A549 (cell line): ENCODE measurements at regions of chr2 and their contacts with region 1.

Region 1: DNA sequence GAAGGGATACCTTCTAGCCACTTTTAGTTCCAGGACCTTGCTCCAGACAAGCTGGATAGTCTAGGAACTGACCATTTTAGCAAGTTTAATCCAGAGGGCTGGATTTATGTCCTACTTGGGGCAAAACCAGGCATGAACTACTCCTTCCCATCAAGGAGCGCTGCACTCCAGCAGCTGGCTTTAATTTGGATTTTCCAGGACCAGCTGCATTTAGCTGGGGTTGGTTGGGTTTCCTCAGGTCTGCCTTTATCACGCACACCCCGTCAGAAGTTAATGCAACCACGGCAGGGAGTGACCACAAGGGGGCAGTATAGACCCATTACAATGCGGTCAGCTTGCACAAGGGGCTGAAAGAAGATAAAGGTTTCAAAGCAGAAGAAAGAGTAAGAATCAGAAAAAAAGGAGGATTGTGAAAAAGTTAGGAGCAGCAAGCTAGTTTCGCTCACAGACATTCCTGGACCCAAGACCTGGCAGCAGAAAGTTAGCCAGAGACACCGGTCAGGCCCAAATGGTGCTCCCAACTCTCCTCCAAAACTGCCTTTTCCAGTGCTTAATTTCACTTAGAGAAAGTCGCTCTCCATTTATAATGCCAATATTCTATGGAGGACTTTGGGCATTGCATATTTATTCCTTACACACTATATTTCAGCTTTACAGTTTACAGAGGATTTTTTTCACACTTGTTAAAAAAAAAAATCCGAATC is 40.1 kb downstream of the SLC4A1AP start:
- DNase-seq: peak; percentile 90
- ATAC-seq: peak; percentile 68 to 77
- H3K4me3 ChIP-seq: no peak overlapping the region
- H3K27ac ChIP-seq: peak overlapping the region; percentile 91 to 99
- H3K4me1 ChIP-seq: peaks cover 65% of the 10 kb centered on the region
- CTCF ChIP-seq: peak; percentile 98
- EP300 ChIP-seq: no peak
- POLR2A ChIP-seq: no peak
- RAD21 ChIP-seq: peak; percentile 99

Region 2: DNA sequence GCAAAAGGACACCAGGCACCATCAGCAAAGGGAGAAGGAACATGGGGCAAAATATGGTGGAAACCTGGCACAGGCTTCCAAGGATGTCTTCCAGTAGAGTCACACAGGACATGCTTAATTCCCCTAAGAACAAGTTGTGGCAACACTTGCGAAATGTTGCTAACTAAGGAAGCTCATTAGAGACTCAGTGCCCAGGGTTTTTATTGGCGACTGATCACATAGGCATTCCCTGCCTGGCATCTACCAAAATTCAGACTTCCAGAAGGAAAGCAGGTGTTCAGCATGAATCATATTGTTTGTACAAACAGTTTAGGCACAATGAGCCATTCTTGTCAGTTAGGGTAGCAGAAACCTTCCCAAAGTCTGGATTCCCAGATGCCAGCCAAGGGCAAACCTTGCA is 14.4 kb before region 1 on chr2:
- CTCF ChIA-PET with region 1: interaction called, 46 read pairs
- POLR2A ChIA-PET with region 1: no interaction called
- DNase-seq: no peak
- ATAC-seq: no peak
- H3K4me3 ChIP-seq: no peak overlapping the region
- H3K27ac ChIP-seq: no peak overlapping the region
- H3K4me1 ChIP-seq: peaks cover 6% of the 10 kb centered on the region; the same call in 2 of the 3 replicates
- CTCF ChIP-seq: no peak
- EP300 ChIP-seq: no peak
- POLR2A ChIP-seq: no peak
- RAD21 ChIP-seq: no peak

Region 3: DNA sequence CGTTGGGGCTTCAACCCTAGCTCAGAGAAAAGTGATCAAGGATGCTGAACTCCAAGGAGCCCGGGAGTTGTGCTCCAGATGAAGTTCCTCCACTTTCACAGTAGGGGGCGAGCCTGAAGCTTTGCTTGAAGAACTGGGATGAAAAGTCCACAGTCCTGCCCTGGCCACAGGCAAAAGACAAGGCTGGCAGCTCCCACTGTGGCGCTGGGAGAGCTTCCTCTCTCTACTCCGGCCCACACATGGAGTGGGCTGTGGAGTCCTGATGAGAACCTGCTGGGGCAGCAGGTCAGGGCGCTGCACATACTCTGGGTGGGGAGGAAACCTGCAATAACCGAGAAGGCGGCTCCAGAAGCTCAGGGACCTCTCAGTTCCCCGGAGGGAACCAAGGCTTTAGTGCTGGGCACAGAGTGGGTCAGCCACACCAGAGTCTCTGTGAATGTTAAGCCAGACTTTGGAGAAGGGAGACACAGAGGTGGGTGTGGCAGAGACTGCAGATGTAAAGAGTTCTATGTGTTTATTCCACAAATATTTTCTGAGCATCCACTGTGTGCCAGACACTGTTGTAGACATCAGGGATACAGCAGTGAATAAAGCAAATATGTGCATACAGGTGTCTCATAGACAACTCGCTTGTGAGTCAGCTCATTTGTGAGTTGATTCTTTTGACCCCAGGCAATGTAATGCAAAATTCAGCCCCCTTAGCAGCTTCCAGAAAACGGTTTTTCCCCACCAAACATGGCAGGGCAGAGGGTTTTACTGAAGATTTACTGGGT is 19.8 kb after region 1 on chr2:
- CTCF ChIA-PET with region 1: interaction called, 167 read pairs
- POLR2A ChIA-PET with region 1: interaction called, 5 read pairs
- DNase-seq: peak; percentile 83 to 92
- ATAC-seq: peak; percentile 51 to 77
- H3K4me3 ChIP-seq: no peak overlapping the region
- H3K27ac ChIP-seq: peak overlapping the region; percentile 93 to 98
- H3K4me1 ChIP-seq: peaks cover 65% of the 10 kb centered on the region
- CTCF ChIP-seq: peak; percentile 78
- EP300 ChIP-seq: peak; percentile 36 to 62; a peak in 2 of 5 replicates
- POLR2A ChIP-seq: no peak
- RAD21 ChIP-seq: peak; percentile 82 to 86

Region 4: DNA sequence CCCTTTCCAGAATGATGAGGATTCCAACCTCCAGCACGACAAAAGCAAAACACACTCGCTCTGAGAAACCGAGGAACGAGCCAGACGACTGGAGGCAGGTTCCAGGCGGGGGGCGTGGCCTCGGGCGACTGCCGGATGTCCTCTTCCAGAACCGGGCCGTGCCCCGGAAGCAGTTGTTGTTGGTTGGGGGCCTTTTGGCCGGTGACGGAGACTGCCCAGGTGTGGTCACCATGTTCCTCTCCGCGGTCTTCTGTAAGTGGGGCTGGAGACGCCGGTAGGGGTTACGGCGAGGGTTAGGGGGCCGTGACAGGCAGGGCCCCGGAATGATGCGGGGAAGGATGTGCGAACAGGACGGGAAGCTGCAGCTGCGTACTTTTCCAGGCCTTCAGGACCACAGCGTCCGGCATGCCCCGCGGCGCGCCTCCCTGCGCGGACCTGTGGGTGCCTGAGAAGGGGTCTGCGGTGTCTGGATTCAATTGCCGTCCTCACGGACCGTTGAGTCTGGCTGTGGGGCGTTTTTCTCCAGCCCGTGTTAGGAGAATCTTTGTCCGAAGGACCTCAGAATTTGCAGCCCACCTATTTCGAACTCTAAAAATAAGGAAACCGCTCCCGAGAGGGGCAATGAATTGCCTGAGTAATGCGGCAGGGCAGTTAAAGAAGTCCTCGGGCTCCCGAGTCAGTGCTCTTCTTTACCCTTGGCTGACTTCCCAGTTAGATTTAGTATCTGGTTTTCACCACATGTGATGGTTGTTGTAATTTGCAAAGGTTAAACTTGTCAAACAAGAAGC is 68.0 kb after region 1 on chr2 and contains the start of gene MRPL33:
- CTCF ChIA-PET with region 1: interaction called, 13 read pairs
- POLR2A ChIA-PET with region 1: no interaction called
- DNase-seq: peak; percentile 95 to 99
- ATAC-seq: peak; percentile 98 to 99
- H3K4me3 ChIP-seq: peak within 1 kb of the TSS; percentile 92
- H3K27ac ChIP-seq: peak within 1 kb of the TSS; percentile 93 to 94
- H3K4me1 ChIP-seq: peaks cover 34% of the 10 kb centered on the region
- CTCF ChIP-seq: no peak
- EP300 ChIP-seq: no peak
- POLR2A ChIP-seq: peak; percentile 74
- RAD21 ChIP-seq: 0 out of 5 replicates have a peak, but pooled peaks of 1 of the 2 experiments have one; percentile 3
- polyA plus RNA-seq, gene MRPL33: 171 and 287 TPM in 2 replicates

Region 5: GRCh38 chr2:27838502-27838901 is 134.7 kb after region 1 on chr2:
- CTCF ChIA-PET with region 1: no interaction called
- POLR2A ChIA-PET with region 1: no interaction called
- DNase-seq: no peak
- ATAC-seq: no peak
- H3K4me3 ChIP-seq: no peak overlapping the region
- H3K27ac ChIP-seq: no peak overlapping the region
- H3K4me1 ChIP-seq: no peaks in the 10 kb centered on the region
- CTCF ChIP-seq: no peak
- EP300 ChIP-seq: no peak
- POLR2A ChIP-seq: no peak
- RAD21 ChIP-seq: no peak

Region 6: GRCh38 chr2:27903649-27904404 is 200.0 kb after region 1 on chr2:
- CTCF ChIA-PET with region 1: no interaction called
- POLR2A ChIA-PET with region 1: no interaction called
- DNase-seq: peak in 1 of 2 experiments; percentile 61
- ATAC-seq: peak; percentile 43 to 64; a peak in 3 of 6 replicates
- H3K4me3 ChIP-seq: no peak overlapping the region
- H3K27ac ChIP-seq: peak overlapping the region; percentile 7 to 12; a peak in 3 of 6 replicates
- H3K4me1 ChIP-seq: peaks cover 33% of the 10 kb centered on the region
- CTCF ChIP-seq: no peak
- EP300 ChIP-seq: no peak
- POLR2A ChIP-seq: no peak
- RAD21 ChIP-seq: no peak

Region 7: DNA sequence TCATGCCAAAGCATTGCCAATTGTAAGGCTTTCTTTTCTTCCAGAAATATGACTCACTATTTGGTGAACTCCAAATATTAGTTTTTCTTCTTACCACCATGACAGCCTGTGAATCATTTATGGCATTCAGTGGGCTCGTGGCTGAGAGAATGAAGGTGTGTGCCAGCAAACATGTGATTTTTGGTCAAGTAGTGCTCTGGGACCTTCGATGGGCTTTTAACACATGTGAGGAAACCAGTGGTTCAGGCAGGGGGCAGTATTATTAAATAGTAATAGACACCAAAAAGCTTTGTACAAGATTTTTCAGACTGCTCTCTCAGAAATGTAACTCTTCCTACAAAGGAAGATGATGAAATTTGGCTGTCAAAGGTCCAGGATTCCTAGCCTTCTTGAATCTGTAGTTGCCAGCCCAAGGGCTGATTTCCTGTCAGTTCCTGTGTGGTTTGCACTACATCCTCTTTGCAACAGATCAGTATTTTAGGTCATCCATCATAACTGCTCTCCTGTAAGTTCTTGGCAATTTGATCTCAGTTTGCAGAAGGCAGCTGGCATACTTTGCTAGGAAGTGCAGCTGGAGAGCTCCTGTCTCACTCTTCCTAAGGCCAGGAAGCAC is 251.1 kb after region 1 on chr2:
- CTCF ChIA-PET with region 1: interaction called, 11 read pairs
- POLR2A ChIA-PET with region 1: no interaction called
- DNase-seq: peak; percentile 60 to 96
- ATAC-seq: peak; percentile 90 to 95
- H3K4me3 ChIP-seq: no peak overlapping the region
- H3K27ac ChIP-seq: peak overlapping the region; percentile 80 to 93
- H3K4me1 ChIP-seq: peaks cover 68% of the 10 kb centered on the region
- CTCF ChIP-seq: peak; percentile 82
- EP300 ChIP-seq: peak; percentile 91 to 97; a peak in 3 of 5 replicates
- POLR2A ChIP-seq: no peak
- RAD21 ChIP-seq: peak; percentile 68 to 93

Region 8: DNA sequence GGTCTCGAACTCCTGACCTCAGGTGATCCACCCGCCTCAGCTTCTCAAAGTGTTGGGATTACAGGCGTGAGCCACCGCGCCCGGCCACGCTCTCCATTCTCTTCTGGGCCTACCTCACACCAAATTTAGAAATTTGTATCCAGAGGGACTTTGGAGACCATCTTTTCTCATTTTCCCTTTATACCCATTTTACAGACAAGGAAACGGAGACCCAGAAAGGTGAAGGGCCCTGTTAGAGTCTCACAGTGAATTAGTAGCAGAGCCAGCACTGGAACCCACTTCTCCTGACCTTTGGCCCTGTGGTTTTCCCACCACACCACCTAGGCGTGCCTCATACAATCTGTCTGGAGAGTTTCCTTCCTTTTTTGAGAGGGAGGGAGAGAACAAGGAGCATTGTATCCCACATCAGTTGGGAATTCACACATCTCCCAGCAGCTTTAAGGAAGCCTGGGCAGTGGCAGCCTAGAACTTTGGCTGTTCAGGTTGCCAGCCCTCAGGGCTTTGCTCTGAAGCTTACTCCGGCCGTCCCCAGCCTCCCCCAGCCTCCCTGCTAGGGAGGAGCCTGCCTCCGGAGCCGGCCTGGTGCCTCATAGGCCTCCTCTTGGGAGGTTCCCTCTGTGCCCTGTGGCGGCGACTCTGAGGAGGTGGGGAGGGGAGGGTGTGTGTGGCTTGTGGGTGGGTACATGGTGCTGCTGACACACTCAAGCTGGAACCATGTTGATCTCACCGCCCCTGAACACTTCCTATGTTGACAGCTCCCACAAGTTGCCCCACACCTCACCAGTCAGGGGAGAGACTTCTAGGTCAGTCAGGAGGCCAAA is 702.7 kb after region 1 on chr2:
- CTCF ChIA-PET with region 1: interaction called, 30 read pairs
- POLR2A ChIA-PET with region 1: interaction called, 15 read pairs
- DNase-seq: no peak
- ATAC-seq: peak in 1 of 2 experiments; percentile 5; a peak in 3 of 6 replicates
- H3K4me3 ChIP-seq: no peak overlapping the region
- H3K27ac ChIP-seq: peak overlapping the region in 1 of 2 experiments; percentile 79; a peak in 3 of 6 replicates
- H3K4me1 ChIP-seq: peaks cover 89% of the 10 kb centered on the region
- CTCF ChIP-seq: no peak
- EP300 ChIP-seq: no peak
- POLR2A ChIP-seq: no peak
- RAD21 ChIP-seq: no peak

Region 9: GRCh38 chr2:28430788-28431418 is 727.1 kb after region 1 on chr2:
- CTCF ChIA-PET with region 1: interaction called, 10 read pairs
- POLR2A ChIA-PET with region 1: no interaction called
- DNase-seq: no peak
- ATAC-seq: peak; percentile 14 to 26; a peak in 4 of 6 replicates
- H3K4me3 ChIP-seq: no peak overlapping the region
- H3K27ac ChIP-seq: peak overlapping the region in 1 of 2 experiments; percentile 46; a peak in 2 of 6 replicates
- H3K4me1 ChIP-seq: peaks cover 27% of the 10 kb centered on the region
- CTCF ChIP-seq: no peak
- EP300 ChIP-seq: no peak
- POLR2A ChIP-seq: no peak
- RAD21 ChIP-seq: no peak